Mammary epithelial cell (primary cell): ENCODE measurements at regions of chr3 and their contacts with region 1.

Region 1: DNA sequence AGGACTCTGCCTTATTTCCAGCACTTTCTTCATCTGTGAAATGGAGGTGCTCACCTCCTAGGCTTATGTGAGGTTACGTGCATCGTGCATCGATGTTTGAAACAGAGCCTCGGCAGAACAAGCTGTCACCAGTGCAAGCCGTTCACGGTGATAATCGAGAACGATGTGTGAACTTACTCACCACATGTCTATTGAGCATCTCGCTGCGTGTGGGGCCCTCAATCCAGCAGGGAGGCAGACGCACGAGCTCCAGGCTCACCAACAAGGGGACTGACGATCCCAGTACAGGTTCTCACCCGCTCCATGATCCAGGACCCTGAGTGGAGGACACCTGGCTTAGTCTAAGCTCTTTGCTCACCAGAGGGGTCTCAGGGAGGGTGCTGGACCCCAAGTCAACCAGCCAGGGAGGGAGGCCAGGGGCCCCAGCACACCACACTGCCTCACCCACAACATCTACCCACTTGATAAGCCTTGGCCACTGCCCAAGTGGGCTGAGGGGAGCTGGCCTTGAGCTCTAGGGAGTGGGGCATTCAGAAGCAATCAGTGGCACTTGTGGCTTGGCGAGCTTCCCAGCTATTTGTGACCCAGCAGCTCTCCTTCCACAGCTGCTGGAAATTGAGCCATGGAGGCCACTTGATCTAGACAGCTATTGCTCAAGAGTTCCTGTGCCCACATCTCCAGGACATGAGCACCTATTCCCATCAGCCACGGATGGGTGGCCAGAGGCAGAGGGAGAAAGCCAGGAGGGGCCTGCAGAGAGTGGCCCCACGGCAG is 34.4 kb upstream of the SLC6A1 start:
- DNase-seq: no peak
- H3K4me3 ChIP-seq: no peak overlapping the region
- H3K27ac ChIP-seq: no peak overlapping the region
- H3K4me1 ChIP-seq: no peaks in the 10 kb centered on the region
- H3K27me3 ChIP-seq: peaks cover 6% of the 10 kb centered on the region
- CTCF ChIP-seq: no peak

Region 2: DNA sequence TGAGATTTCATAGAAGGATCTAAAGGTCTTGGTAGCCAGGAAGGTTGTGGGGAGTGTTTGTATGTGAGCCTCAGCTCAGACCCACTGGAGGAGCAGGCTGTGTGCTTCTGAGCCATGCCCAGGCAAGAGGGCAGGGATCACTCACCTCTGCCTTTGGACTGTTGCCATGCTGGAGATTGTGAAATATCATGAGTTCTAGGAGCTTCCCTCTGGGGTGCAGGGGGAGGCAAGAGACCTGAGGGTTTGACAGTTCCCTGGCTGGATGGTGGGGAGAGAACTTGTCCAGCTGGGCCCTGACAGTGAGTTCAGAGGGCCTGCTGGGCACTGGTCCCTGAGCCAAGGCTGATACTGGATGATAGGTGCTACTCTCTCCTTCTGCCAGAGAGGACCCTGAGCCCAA is 40.4 kb after region 1 on chr3:
- CTCF ChIA-PET with region 1: no interaction called
- dilution Hi-C with region 1: loop called (anchors 5 kb)
- in situ Hi-C with region 1: no loop called
- intact Hi-C with region 1: no loop called
- DNase-seq: no peak
- H3K4me3 ChIP-seq: no peak overlapping the region
- H3K27ac ChIP-seq: no peak overlapping the region
- H3K4me1 ChIP-seq: no peaks in the 10 kb centered on the region
- H3K27me3 ChIP-seq: peaks cover 39% of the 10 kb centered on the region
- CTCF ChIP-seq: no peak